ENCODE measurements at regions of chr1 and their contacts with region 1.

Region 1: DNA sequence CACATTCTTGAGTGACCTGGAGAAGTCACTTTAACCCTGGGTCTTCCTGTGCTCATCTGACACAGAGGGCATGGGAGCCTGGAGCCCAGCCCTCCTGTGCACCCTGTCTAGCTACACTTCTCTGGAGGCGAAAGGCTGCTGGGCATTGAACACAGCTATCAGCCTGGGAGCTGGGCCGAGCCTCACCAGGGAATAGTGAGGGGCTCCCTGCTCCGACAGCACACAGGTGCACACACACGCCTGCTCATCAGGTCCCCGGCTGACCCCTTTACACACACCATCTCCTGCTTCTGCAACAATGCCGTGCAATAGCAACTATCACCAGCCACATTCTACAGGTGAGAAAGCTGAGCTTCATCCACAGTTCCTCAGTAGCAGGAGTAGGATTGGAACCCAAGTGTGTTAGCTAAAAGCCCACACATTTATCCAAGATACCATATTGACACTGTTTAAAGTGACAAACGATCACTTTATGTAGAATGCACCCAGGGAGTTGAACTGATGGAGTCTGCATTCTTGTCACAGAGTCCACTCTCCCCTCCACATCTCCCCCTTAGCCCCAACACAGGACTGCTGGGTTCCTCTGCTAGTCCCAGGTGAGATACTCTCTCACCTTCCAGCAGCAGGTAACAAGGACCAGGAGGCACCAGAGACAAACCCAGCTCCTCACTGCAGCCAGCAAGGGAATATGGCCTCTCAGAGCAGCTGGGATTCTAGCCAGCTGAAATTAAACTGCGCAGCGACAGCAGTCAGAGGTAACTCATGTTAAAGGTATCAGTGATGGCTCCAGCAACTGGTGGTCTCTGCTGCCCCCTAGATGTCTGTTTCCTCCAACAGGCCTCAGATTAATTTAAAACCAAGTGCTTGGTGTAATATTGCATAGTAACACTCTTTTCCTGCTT is 18.3 kb upstream of the CAPN8 start:
- DNase-seq: peak; percentile 71 to 79
- H3K4me3 ChIP-seq: no peak overlapping the region
- H3K4me3 Mint-ChIP-seq: no peak overlapping the region
- H3K27ac Mint-ChIP-seq: no peak overlapping the region
- H3K4me1 ChIP-seq: no peaks in the 10 kb centered on the region
- H3K4me1 Mint-ChIP-seq: no peaks in the 10 kb centered on the region
- H3K27me3 ChIP-seq: no peaks in the 10 kb centered on the region
- H3K27me3 Mint-ChIP-seq: peaks cover 5% of the 10 kb centered on the region
- CTCF ChIP-seq: peak; percentile 82 to 83

Region 2: DNA sequence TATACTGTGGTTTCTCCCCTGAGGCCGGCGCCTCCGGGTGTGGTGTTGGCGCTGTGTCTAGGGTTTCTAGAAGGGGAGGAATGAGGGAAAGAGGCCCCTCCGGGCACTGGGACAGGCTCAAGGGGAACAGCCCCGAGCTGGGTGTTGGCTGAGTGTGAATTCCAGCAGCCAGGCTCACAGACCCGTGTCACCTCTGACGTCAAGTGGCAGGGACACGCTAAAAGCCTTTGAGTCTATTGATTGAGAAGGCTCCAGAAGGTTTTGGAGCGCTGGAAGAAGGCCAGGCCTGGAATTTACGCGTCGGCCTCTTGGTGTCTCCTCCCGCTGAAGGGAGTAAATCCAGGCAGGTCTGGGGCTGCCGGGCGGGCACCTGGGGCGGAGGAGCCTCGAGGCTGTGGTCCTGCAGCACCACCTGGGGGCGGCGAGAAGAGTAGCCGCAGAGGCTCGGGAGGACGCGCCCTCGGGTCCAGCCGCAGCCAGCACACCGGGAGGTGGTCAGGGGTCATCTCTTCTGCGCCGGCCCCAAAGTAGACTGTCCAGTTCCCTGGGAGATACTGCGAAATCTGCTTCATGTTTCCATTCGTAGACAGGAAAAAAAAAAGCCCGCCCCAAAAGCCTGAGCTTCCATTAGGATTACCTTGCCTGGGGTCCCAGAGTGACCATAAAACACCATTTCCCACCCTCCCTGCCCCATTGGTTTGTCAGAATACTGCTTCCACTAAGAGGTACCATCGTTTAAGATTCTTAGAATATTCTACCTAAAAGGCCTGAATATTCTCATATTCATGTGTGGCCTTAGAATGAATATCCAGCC is 602.4 kb before region 1 on chr1:
- CTCF ChIA-PET with region 1: no interaction called
- POLR2A ChIA-PET with region 1: no interaction called
- intact Hi-C with region 1: loop called (anchors 1 kb)
- DNase-seq: peak; percentile 96 to 98
- H3K4me3 ChIP-seq: no peak overlapping the region
- H3K4me3 Mint-ChIP-seq: peak overlapping the region; percentile 60
- H3K27ac Mint-ChIP-seq: peak overlapping the region; percentile 96
- H3K4me1 ChIP-seq: no peaks in the 10 kb centered on the region; the same call in 1 of the 2 replicates
- H3K4me1 Mint-ChIP-seq: peaks cover 20% of the 10 kb centered on the region
- H3K27me3 ChIP-seq: no peaks in the 10 kb centered on the region
- H3K27me3 Mint-ChIP-seq: no peaks in the 10 kb centered on the region
- CTCF ChIP-seq: peak; percentile 92 to 98

Region 3: GRCh38 chr1:223175032-223175431 is 508.8 kb before region 1 on chr1:
- CTCF ChIA-PET with region 1: interaction called, 16 read pairs
- POLR2A ChIA-PET with region 1: no interaction called
- intact Hi-C with region 1: loop called (anchors 1 kb)
- DNase-seq: peak; percentile 63 to 66
- H3K4me3 ChIP-seq: no peak overlapping the region
- H3K4me3 Mint-ChIP-seq: no peak overlapping the region
- H3K27ac Mint-ChIP-seq: peak overlapping the region; percentile 35
- H3K4me1 ChIP-seq: peaks cover 5% of the 10 kb centered on the region
- H3K4me1 Mint-ChIP-seq: peaks cover 5% of the 10 kb centered on the region
- H3K27me3 ChIP-seq: no peaks in the 10 kb centered on the region
- H3K27me3 Mint-ChIP-seq: no peaks in the 10 kb centered on the region
- CTCF ChIP-seq: peak; percentile 45 to 70

Region 4: DNA sequence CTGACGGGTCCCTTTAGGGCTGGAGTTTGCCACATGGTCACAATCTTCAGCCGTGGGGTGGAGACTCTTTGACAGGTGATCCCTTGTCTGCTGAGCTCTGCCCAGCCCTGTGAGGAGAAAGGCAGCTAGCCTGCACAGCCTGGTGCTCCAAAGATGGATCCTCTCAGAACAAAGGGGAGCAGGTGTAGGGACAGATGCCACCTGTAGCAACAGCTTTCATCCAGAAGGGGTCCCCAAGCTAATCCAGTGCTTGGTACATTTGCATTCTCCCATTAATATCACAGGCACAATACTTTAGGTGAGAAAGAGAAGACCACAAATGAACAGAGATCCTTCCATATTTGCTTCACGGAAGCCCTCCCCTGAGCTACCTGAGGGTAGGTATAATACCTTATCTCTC is 197.5 kb before region 1 on chr1:
- CTCF ChIA-PET with region 1: no interaction called
- POLR2A ChIA-PET with region 1: no interaction called
- intact Hi-C with region 1: loop called (anchors 5 kb)
- DNase-seq: peak in 1 of 2 experiments; percentile 16
- H3K4me3 ChIP-seq: no peak overlapping the region
- H3K4me3 Mint-ChIP-seq: no peak overlapping the region
- H3K27ac Mint-ChIP-seq: no peak overlapping the region
- H3K4me1 ChIP-seq: peaks cover 12% of the 10 kb centered on the region
- H3K4me1 Mint-ChIP-seq: peaks cover 19% of the 10 kb centered on the region
- H3K27me3 ChIP-seq: no peaks in the 10 kb centered on the region
- H3K27me3 Mint-ChIP-seq: no peaks in the 10 kb centered on the region
- CTCF ChIP-seq: peak in 1 of 2 experiments; percentile 38

Region 5: DNA sequence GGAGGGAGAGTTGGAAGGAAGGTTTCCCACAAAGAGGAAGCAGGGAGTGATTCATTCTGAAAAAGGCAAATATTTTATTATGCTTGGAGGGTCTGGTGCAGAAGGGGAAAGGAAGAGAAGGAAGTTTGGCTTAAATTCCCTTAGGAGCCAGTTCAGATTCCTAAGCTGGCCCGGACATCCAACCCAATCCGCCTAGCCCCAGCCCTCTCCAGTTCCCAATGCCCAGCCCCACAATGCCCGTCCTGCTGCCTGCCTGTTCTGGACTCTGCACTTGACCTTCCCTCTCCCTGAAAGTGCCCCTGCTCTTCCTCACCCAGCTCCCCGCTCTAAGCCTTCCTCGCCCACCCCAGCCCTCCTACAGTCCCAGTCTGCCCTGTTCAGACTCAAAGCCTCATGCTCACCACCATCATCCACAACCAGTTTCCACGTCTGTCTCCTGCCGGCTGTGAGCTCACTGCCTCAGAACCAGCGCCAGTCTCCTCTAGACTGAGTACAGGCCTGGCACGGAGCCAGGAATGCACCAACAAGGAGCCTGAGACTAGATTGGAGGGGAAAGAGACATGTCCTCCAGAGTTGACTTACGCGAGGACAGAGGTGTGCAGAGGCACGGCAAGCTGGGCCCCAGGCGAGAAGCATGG is 47.4 kb after region 1 on chr1:
- CTCF ChIA-PET with region 1: no interaction called
- POLR2A ChIA-PET with region 1: no interaction called
- intact Hi-C with region 1: no loop called
- DNase-seq: no peak
- H3K4me3 ChIP-seq: no peak overlapping the region
- H3K4me3 Mint-ChIP-seq: no peak overlapping the region
- H3K27ac Mint-ChIP-seq: peak overlapping the region; percentile 25
- H3K4me1 ChIP-seq: peaks cover 37% of the 10 kb centered on the region
- H3K4me1 Mint-ChIP-seq: peaks cover 44% of the 10 kb centered on the region
- H3K27me3 ChIP-seq: no peaks in the 10 kb centered on the region
- H3K27me3 Mint-ChIP-seq: no peaks in the 10 kb centered on the region
- CTCF ChIP-seq: no peak

Measured in Caco-2 (cell line).